ENCODE measurements at regions of chr9 and their contacts with region 1.

Region 1: GRCh38 chr9:134344068-134344799 is 18.0 kb downstream of the RXRA start:
- DNase-seq: peak in 2 of 3 donors; percentile 75 to 82
- ATAC-seq: peak in 3 of 4 donors; percentile 0 to 14 (median 1)
- H3K4me3 ChIP-seq: no peak overlapping the region
- H3K27ac ChIP-seq: peak overlapping the region; percentile 43 to 72 (median 65)
- H3K4me1 ChIP-seq: peaks cover 0 to 98% (median 54%) of the 10 kb centered on the region in 4 donors
- H3K27me3 ChIP-seq: no peaks in the 10 kb centered on the region
- CTCF ChIP-seq: no peak
- POLR2A ChIP-seq: no peak

Region 2: DNA sequence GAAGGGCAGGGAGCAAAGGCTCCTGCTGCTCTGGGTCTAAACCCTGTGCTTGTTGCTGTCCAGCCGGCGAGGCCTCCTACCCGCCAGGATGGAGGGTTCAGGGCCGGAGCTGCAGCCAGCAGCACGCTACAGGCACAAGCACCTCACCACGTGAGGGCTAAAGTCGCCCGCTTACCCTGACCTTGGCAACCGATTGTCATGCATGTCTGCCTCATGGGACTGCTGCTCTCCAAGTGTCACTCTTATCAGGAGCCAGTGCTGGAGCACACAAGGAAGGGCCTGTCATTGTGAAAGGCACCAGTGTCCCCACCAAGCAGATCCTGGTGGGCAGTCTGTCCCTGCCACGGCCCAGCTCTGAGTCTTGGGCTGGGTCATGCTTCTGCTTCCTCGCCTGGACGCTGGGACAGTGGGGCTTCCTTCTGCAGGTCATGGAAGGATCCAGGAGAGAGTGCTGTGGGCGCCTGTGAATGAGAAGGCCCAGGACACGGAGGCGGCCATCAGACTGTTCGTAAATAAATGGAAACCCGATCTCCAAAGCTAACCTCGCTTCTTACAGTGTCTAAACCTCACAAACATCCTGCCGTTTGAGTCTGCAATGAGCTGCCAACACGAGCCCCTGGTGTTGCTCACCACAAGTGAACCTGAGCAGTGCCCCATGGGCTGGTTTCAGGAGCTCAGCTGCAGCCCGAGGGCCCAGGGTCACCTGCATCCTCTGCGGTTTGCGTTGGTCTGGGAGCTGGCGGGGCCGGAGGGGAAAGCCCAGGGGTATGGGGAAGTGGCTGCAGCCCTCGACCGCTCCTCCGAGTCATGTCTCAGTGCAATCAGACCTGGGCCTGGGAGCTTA is 76.1 kb before region 1 on chr9:
- intact Hi-C with region 1: no loop called
- DNase-seq: peak; percentile 65 to 97 (median 96)
- ATAC-seq: peak; percentile 55 to 76 (median 70)
- H3K4me3 ChIP-seq: no peak overlapping the region
- H3K27ac ChIP-seq: peak overlapping the region in 2 of 3 donors; percentile 91 to 95
- H3K4me1 ChIP-seq: peaks cover 0 to 70% (median 33%) of the 10 kb centered on the region in 4 donors
- H3K27me3 ChIP-seq: no peaks in the 10 kb centered on the region
- CTCF ChIP-seq: no peak
- POLR2A ChIP-seq: peak; percentile 33

Region 3: GRCh38 chr9:134293611-134294165 is 50.5 kb before region 1 on chr9:
- intact Hi-C with region 1: no loop called
- DNase-seq: peak in 1 of 3 donors; percentile 52
- ATAC-seq: no peak
- H3K4me3 ChIP-seq: no peak overlapping the region
- H3K27ac ChIP-seq: no peak overlapping the region
- H3K4me1 ChIP-seq: peaks cover 0 to 15% (median 6%) of the 10 kb centered on the region in 4 donors
- H3K27me3 ChIP-seq: no peaks in the 10 kb centered on the region
- CTCF ChIP-seq: no peak
- POLR2A ChIP-seq: no peak

Region 4: GRCh38 chr9:134381671-134382516 is 37.7 kb after region 1 on chr9:
- intact Hi-C with region 1: loop called in 1 of 2 experiments (anchors 5 kb)
- DNase-seq: peak in 1 of 3 donors; percentile 67
- ATAC-seq: peak in 3 of 4 donors; percentile 1
- H3K4me3 ChIP-seq: no peak overlapping the region
- H3K27ac ChIP-seq: peak overlapping the region; percentile 33 to 63 (median 44)
- H3K4me1 ChIP-seq: peaks cover 0 to 100% (median 59%) of the 10 kb centered on the region in 4 donors
- H3K27me3 ChIP-seq: no peaks in the 10 kb centered on the region
- CTCF ChIP-seq: peak; percentile 16 to 23 (median 18)
- POLR2A ChIP-seq: no peak

Region 5: DNA sequence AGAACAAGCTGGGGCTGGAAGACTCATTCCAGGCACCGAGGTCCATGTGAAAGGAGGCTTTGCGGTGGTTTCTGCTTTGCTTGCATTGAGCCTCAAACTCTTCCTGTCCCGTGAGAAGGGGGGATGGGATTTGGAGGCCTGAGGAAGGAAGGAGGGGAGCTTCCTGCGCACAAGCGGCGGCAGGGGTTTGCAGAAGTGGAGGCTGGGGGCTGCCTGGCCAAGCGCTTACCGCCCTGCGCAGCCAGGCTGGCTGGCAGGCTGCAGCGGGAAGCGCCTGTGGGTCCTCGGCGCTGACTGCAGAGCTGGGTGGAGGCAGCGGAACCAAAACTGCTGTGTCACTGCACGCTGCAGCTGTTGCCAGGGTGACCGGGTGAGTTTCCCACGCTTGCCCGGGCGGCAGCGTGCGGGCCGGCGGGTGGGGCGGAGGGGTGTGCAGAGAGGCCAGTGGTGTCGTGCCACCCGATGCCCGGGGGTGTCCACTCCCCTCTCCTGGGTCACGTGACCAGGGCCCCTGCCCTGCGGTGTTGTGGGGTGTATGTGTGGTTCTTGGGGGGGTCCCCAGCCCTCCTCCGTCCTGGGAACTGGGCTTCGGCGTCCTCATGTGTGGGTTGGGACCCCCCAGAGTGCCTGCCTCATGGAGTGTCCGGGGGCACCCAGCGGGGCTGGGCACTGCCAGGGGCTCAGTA is 63.0 kb after region 1 on chr9:
- intact Hi-C with region 1: no loop called
- DNase-seq: peak; percentile 92 to 96 (median 95)
- ATAC-seq: peak; percentile 62 to 72 (median 66)
- H3K4me3 ChIP-seq: peak overlapping the region in 1 of 3 donors; percentile 8
- H3K27ac ChIP-seq: peak overlapping the region; percentile 55 to 84 (median 61)
- H3K4me1 ChIP-seq: peaks cover 11 to 100% (median 59%) of the 10 kb centered on the region in 4 donors
- H3K27me3 ChIP-seq: no peaks in the 10 kb centered on the region
- CTCF ChIP-seq: no peak
- POLR2A ChIP-seq: peak; percentile 37

Region 6: DNA sequence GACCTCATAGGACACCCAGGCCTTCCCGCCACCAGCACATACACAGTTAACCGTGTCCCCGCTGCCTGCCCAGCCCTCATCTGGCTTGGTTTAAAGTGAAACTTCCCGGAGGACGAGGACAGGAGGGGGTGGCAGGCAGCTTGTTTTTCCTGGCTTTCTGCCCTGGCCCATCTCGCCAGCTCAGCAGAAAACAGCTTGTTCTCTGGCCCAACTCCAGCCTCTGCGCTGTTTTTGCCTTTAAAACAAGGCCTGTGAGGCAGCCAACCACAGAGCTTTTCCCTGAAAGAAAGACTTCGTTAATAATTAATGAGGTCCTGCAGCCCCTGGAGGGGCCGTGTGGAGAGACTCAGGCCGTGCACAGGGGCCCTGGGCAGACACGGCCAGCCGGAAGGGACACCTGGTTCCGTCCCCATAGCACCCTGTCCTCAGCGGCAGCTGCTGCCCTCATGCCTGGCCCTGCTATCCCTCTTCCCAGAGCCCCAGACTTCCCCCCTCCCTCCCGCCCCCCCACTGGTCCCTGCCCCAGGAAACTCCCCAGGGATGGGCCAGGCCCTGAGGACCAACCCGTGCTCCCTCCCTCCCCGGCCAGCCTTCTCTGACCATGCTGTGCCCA is 90.8 kb after region 1 on chr9:
- intact Hi-C with region 1: loop called in 1 of 2 experiments (anchors 10 kb)
- DNase-seq: peak; percentile 94 to 98 (median 95)
- ATAC-seq: peak; percentile 68 to 76 (median 72)
- H3K4me3 ChIP-seq: peak overlapping the region in 1 of 3 donors; percentile 4
- H3K27ac ChIP-seq: peak overlapping the region; percentile 37 to 93 (median 73)
- H3K4me1 ChIP-seq: peaks cover 0 to 86% (median 43%) of the 10 kb centered on the region in 4 donors
- H3K27me3 ChIP-seq: no peaks in the 10 kb centered on the region
- CTCF ChIP-seq: no peak
- POLR2A ChIP-seq: no peak

Measured in right lobe of liver (tissue), 6 donors.